Activated naive CD4-positive, alpha-beta T cell treated with anti-CD3 and anti-CD28 coated beads for 36 hours (primary cell): ENCODE measurements at regions of chr6 and their contacts with region 1.

Region 1: GRCh38 chr6:118679327-118679901 is 28.0 kb upstream of the CEP85L start:
- DNase-seq: no peak
- H3K4me3 Mint-ChIP-seq: no peak overlapping the region
- H3K27ac Mint-ChIP-seq: peak overlapping the region; percentile 14
- H3K4me1 Mint-ChIP-seq: peaks cover 60% of the 10 kb centered on the region
- H3K27me3 Mint-ChIP-seq: no peaks in the 10 kb centered on the region

Region 2: GRCh38 chr6:118667988-118668387 is 11.4 kb before region 1 on chr6:
- CTCF ChIA-PET with region 1: interaction called, 5 read pairs
- intact Hi-C with region 1: loop called (anchors 1 kb)
- DNase-seq: no peak
- H3K4me3 Mint-ChIP-seq: no peak overlapping the region
- H3K27ac Mint-ChIP-seq: no peak overlapping the region
- H3K4me1 Mint-ChIP-seq: peaks cover 74% of the 10 kb centered on the region
- H3K27me3 Mint-ChIP-seq: no peaks in the 10 kb centered on the region